ENCODE measurements at regions of chr1 and their contacts with region 1.

Region 1: GRCh38 chr1:205791568-205792180 is 16.4 kb upstream of the RAB29 start:
- DNase-seq: peak in 1 of 2 donors; percentile 53
- H3K4me3 ChIP-seq: no peak overlapping the region
- H3K27ac ChIP-seq: no peak overlapping the region
- H3K4me1 ChIP-seq: no peaks in the 10 kb centered on the region
- H3K27me3 ChIP-seq: no peaks in the 10 kb centered on the region
- CTCF ChIP-seq: peak; percentile 33 to 66 (median 66)
- POLR2A ChIP-seq: no peak

Region 2: DNA sequence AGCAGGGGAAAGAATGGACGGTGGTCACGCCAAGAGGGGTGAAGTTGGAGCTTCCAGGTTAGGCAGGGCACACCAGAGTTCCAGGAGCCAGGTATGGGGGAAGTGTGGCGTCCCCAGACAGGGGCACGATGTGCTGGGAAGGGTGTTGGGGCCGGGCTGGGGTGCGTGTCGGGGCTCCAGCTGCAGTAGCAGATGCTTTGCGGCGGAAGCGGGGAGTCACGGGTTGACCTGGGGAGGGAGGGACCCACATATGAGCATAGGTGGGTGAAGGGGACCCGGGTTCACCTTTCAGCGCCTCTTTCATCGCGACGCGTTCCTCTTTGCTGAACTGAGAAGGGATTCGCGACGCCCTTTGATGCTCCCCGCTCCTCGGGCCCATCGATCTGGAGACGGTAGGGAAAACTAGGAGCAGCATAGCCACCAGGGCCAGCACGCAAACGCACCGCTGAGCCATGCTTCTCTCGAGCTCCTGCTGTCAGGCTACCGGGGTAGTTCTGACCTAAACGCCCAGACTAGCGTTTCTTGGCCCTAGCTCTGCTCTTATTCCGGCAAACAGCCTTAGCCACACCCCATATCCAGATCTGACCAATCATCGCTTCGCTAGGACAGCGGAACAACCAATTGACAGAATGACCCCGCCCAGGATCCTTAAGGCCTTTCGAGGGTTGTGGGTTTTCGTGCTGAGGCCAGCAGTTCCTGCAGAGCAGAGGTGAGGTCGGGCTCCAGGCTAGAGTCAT is 58.1 kb after region 1 on chr1 and contains the start of gene PM20D1:
- intact Hi-C with region 1: no loop called
- DNase-seq: peak; percentile 52 to 66
- H3K4me3 ChIP-seq: peak within 1 kb of the TSS; percentile 30 to 46 (median 39)
- H3K27ac ChIP-seq: no peak within 1 kb of the TSS
- H3K4me1 ChIP-seq: no peaks in the 10 kb centered on the region
- H3K27me3 ChIP-seq: no peaks in the 10 kb centered on the region
- CTCF ChIP-seq: no peak
- POLR2A ChIP-seq: no peak
- total RNA-seq, gene PM20D1: 0.15 to 0.33 (median 0.16) TPM

Region 3: DNA sequence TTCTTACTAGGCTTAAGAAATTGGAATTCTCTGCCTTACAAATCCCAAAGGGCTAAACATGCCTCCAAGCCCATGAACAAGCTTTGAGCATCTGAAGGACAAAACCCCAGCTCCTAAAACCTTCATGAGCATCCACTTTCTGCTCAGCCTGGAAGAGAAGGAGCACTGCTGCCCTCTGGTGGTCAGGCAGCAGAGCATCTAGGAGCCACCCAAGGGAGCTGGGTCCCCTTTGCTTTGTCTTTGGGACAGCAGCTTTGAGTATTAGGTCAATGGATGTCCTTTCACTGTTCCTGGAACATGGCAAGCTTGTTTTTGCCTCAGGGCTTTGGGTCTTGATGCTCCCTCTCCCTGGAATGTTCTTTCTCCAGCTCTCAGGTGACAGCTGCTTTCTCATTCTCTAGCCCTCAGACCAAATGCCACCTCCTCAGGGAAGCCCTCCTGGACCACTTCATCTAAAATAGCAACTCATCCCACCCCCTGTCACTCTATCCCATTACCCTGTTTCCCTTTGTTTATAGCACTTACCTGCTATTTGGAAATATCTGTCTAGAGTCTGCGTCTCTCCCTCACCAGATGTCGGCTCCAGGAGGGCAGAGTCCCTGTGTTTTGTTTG is 185.8 kb after region 1 on chr1:
- intact Hi-C with region 1: loop called (anchors 10 kb)
- DNase-seq: peak; percentile 57 to 69
- H3K4me3 ChIP-seq: no peak overlapping the region
- H3K27ac ChIP-seq: no peak overlapping the region
- H3K4me1 ChIP-seq: no peaks in the 10 kb centered on the region
- H3K27me3 ChIP-seq: peaks cover 0 to 4% of the 10 kb centered on the region in 2 donors
- CTCF ChIP-seq: peak; percentile 89 to 95 (median 93)
- POLR2A ChIP-seq: no peak

Measured in breast epithelium (tissue), 4 donors.